Keratinocyte (primary cell): ENCODE measurements at regions of chr12 and their contacts with region 1.

Region 1: DNA sequence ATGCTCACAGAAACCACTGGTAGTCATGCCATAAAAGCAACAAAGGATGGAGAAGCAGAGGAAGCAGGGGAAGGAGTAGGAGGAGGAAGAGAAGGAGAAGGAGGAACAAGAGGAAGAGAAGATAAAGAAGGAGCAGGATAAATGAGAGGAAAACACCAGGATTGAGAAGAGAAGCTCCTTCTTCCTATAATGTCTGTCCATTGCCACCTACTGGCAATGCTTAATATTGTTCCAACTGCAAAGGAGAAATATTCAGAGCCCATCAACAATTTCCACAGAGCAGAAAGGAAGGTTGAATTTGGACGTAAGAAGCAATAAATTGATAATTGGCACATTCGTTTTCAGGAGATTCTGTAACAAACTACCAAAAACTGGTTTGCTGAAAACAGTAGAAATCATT is 898.4 kb downstream of the SLC16A7 start:
- DNase-seq: no peak
- H3K4me3 ChIP-seq: no peak overlapping the region
- H3K27ac ChIP-seq: no peak overlapping the region
- H3K4me1 ChIP-seq: no peaks in the 10 kb centered on the region
- H3K27me3 ChIP-seq: no peaks in the 10 kb centered on the region
- CTCF ChIP-seq: peak in 2 of 3 experiments; percentile 58 to 66

Region 2: GRCh38 chr12:60257063-60257462 is 237.2 kb before region 1 on chr12:
- dilution Hi-C with region 1: loop called (anchors 25 kb)
- DNase-seq: no peak
- H3K4me3 ChIP-seq: no peak overlapping the region
- H3K27ac ChIP-seq: no peak overlapping the region
- H3K4me1 ChIP-seq: peaks cover 3% of the 10 kb centered on the region
- H3K27me3 ChIP-seq: no peaks in the 10 kb centered on the region
- CTCF ChIP-seq: peak in 2 of 3 experiments; percentile 23 to 54

Region 3: DNA sequence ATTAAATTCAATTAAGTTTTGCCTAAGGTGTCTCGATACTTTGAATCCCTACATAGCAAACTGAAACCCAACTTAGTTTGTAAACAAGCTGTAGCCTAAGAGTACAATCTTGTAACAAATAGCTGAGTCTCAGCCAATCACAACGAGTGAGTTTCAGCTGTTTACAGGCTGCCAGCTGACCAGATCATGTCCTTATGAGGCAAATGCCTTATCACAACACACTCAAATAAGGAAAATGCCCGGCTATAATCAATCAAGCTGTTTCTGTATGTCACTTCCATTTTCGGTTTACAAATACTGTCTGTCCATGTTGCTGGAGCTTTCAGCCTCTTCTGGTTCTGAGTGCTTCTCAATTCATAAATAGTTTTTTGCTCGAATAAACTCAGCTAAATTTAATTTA is 45.3 kb after region 1 on chr12:
- dilution Hi-C with region 1: no loop called
- DNase-seq: no peak
- H3K4me3 ChIP-seq: no peak overlapping the region
- H3K27ac ChIP-seq: no peak overlapping the region
- H3K4me1 ChIP-seq: no peaks in the 10 kb centered on the region
- H3K27me3 ChIP-seq: no peaks in the 10 kb centered on the region
- CTCF ChIP-seq: no peak